Vagina (tissue), 2 donors: ENCODE measurements at regions of chr6 and their contacts with region 1.

Region 1: GRCh38 chr6:156310701-156311100 is 466.5 kb upstream of the ARID1B start:
- DNase-seq: no peak
- H3K4me3 ChIP-seq: no peak overlapping the region
- H3K27ac ChIP-seq: no peak overlapping the region
- H3K4me1 ChIP-seq: no peaks in the 10 kb centered on the region
- H3K27me3 ChIP-seq: no peaks in the 10 kb centered on the region
- CTCF ChIP-seq: no peak
- POLR2A ChIP-seq: no peak

Region 2: GRCh38 chr6:154962753-154963152 is 1347.9 kb before region 1 on chr6:
- intact Hi-C with region 1: no loop called
- DNase-seq: no peak
- H3K4me3 ChIP-seq: no peak overlapping the region
- H3K27ac ChIP-seq: no peak overlapping the region
- H3K4me1 ChIP-seq: no peaks in the 10 kb centered on the region
- H3K27me3 ChIP-seq: no peaks in the 10 kb centered on the region
- CTCF ChIP-seq: no peak
- POLR2A ChIP-seq: no peak

Region 3: DNA sequence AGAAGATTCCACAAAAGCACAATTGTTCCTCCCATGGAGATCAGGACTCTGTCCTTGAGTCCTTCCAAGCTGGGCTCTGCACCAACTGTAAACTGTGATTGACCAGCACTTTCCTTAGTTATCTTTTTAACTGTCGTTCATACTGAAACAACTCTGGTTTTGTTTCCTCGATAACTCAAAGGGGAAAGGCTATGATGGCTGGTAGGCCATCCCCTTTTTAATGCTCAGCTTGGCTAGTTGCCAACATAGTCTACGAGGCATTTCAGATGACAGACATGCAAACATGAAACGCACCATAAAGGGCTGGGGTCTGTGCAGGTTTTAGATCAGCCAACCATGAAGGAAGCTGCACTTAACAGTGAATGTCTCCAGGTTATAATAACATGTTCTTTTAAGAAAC is 30.6 kb before region 1 on chr6:
- intact Hi-C with region 1: loop called (anchors 2 kb)
- DNase-seq: no peak
- H3K4me3 ChIP-seq: no peak overlapping the region
- H3K27ac ChIP-seq: no peak overlapping the region
- H3K4me1 ChIP-seq: no peaks in the 10 kb centered on the region
- H3K27me3 ChIP-seq: no peaks in the 10 kb centered on the region
- CTCF ChIP-seq: no peak
- POLR2A ChIP-seq: no peak

Region 4: GRCh38 chr6:156347656-156348055 is 37.0 kb after region 1 on chr6:
- intact Hi-C with region 1: loop called (anchors 2 kb)
- DNase-seq: no peak
- H3K4me3 ChIP-seq: no peak overlapping the region
- H3K27ac ChIP-seq: no peak overlapping the region
- H3K4me1 ChIP-seq: no peaks in the 10 kb centered on the region
- H3K27me3 ChIP-seq: no peaks in the 10 kb centered on the region
- CTCF ChIP-seq: no peak
- POLR2A ChIP-seq: no peak